GM10248 (cell line): ENCODE measurements at regions of chr11 and their contacts with region 1.

Region 1: DNA sequence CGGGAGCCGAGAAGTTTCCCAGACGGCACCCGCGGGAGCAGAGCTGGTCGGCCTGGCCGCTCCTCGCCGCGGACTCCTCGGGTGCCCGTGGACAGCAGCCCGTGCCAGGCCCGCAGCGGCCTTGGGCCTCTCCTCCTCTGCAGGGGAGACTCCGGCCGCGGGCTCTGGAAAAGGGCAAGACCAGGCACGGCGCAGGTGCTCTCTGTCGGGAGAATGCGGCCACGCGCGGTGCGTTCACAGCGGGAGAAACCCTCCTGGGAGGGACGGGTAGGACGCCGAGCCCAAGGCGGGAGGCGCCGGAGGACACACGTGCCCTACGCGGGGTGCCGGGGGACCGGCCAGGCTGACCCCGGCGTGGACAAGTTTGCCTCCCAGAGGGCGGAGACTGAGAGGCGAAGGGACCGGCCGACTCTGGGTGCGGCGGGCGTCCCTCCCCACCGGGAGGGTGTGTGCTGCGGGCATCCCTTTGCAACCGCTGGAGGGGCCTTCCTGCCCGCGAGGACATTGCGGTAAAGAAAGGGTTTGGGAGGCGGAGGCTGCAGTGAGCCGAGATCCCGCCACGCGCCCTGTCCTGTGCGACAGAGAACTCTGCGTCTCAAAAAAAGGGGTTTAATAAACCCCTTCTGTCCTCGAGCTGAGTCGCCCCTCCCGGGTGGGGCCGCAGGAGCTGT is 2.3 kb downstream of the IFITM1 start:
- DNase-seq: no peak
- CTCF ChIP-seq: no peak

Region 2: DNA sequence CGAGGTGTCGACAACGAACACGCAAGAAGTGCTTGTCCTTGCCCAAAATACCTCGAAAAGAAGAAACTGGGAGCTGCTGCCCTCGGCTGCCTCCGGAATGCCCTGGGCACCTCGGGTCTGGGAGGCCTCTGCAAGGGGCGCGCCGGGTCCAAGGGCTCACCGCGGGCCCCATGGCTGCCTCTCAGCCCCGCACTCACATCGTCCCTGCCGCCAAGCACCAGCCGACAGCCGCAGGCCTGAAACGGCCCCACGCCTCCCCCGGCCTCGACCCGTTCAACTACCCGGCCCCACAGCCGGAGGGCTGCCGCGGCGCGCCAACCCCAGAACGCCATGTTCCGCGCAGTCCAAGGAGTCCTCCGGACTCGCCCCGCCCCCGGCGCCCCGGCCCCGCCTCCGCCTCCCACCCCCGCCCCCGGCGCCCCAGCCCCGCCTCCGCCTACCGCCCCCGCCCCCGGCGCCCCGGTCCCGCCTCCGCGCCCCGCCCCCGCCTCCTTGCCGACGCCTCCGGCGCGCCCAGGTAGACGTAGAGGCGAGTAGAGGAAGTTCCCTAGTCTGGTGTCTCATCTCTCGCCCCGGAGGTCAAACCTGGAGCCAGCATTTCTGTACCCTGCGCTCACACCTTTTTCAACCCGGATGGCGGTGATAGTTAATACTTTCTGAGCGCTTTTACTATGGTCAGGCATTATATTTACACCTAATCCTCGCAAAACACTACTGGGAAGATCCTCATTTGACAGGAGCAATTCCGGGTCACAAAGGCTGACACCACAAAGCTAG is 80.0 kb before region 1 on chr11 and contains the start of gene SIRT3:
- CTCF ChIA-PET with region 1: no interaction called
- POLR2A ChIA-PET with region 1: no interaction called
- DNase-seq: peak; percentile 94
- CTCF ChIP-seq: no peak

Region 3: GRCh38 chr11:257766-258493 is 58.2 kb before region 1 on chr11:
- CTCF ChIA-PET with region 1: no interaction called
- POLR2A ChIA-PET with region 1: no interaction called
- DNase-seq: no peak
- CTCF ChIP-seq: peak; percentile 16

Region 4: GRCh38 chr11:304915-305843 is 11.0 kb before region 1 on chr11:
- CTCF ChIA-PET with region 1: interaction called, 33 read pairs
- POLR2A ChIA-PET with region 1: no interaction called
- DNase-seq: peak; percentile 73
- CTCF ChIP-seq: peak; percentile 69

Region 5: DNA sequence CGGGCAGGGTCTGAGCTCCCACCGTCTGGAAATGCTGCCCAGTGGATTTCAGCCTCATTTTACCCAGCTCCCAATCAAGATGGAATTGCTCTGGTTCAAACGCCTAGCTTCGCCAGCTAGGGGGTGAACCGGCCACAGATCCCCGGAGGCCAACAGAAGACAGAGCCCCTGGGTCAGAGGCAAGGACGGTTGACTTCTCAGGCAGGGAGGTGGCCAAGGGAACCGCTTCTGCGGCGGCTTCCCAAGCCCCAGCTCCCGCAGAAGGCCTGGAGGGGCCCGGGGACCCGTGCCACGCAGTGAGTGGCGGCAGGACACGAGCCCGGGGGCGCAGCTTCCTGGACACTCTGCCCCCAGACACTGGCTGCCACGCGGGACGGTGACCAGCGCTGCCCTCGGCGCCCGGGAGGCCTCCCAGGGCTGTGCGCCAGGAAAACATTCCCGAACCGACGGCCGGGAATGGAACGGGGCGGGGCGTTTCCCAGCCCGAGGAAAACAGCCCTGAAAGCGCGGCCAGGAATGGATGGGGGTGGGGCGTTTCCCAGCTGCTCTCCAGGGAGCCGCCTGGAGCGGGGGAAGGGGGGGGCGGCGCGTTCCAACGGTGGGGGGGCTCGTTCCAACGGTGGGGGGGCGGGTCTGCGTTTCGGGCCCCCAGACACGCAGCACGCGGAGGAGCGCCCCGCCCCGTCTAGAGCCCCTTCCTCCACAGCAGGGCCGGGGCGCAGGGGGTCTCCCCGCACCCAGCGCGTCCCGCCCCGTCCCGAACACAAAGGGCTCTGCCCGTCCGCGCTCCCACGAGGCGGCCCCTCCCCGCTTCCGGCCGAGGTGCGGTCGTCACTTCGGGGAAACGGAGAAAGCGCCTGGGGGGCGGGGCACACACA is 39.7 kb after region 1 on chr11:
- CTCF ChIA-PET with region 1: interaction called, 11 read pairs
- POLR2A ChIA-PET with region 1: interaction called, 3 read pairs
- DNase-seq: peak; percentile 89
- CTCF ChIP-seq: no peak

Region 6: GRCh38 chr11:1036303-1036923 is 720.2 kb after region 1 on chr11 and contains the start of gene MUC6:
- CTCF ChIA-PET with region 1: no interaction called
- POLR2A ChIA-PET with region 1: no interaction called
- DNase-seq: no peak
- CTCF ChIP-seq: no peak